MCF 10A (cell line): ENCODE measurements at regions of chr10 and their contacts with region 1.

Region 1: DNA sequence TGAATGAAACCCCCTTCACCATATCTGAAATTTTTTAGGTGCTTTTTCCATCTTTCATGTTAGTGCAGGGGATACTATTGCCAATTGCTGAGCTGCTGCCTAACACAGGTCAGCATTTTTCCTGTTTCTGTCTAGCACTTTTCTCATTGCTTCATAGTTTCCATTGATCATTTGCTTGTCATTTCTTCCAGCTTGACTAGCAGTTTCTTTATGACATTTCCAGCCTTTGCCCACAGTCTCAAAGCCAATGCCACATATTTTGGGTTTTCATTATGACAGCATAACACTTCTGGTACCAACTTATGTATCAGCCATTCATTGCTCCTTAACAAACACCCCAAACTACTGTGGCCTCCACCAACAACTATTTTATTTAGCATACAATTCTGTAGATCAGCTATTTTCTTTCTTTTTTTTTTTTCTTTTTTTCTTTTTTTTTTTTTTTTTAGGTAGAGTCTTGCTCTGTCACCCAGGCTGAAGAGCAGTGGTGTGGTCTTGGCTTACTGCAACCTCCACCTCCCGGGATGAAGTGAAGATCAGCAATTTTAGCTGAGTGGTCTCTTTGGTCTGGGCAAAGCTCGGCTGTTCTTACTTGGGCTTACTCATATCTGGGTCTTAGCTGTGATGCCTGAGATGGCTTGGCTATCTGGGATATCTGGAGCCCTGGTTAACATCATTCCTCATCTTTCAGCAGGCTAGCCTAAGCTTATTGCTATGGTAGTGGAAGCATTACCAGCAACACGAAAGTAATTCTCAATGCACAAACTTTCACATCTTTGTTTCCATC is 102.3 kb downstream of the EPC1 start:
- DNase-seq: no peak
- H3K4me3 Mint-ChIP-seq: no peak overlapping the region
- H3K27ac Mint-ChIP-seq: no peak overlapping the region
- H3K4me1 Mint-ChIP-seq: peaks cover 29% of the 10 kb centered on the region
- H3K27me3 Mint-ChIP-seq: no peaks in the 10 kb centered on the region
- CTCF ChIP-seq: no peak

Region 2: DNA sequence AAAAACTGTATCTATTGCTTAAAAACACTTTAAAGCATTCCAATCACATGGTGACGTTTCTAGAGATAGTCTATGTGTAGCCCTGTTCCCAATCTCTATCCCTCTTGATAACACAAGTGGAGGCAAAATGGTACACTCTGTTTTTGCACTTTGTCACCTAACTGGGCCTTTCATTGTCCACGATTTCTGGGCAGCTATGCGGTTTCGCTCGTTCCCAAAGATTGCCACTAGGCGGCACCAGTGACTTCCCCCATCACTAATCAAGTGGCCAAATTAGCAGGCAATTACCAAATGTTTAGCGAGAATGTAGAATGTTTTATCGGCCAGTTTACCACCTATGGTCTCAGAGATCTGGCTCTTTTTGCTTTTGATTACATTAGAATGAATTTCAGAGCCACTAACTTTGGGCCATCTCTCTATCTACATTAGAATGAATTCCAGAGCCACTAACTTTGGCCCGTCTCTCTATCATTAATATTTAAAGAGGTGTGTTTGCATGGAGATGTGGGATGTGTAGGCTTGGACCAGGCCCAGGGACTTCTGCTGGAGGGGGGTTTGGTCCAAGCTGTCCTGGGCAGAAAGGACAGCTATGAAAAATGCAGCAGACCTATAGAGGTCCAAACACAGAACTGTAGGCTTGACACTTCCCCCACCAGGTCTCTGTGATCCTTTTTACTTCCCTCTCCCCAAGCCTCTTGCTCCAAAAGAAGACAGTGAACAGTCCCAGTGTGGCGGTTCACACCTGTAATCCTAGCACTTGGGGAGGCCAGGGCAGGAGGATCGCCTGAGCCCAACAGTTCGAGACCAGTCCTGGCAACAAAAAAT is 12.2 kb after region 1 on chr10:
- CTCF ChIA-PET with region 1: interaction called, 11 read pairs
- POLR2A ChIA-PET with region 1: interaction called, 4 read pairs
- intact Hi-C with region 1: no loop called
- DNase-seq: peak; percentile 77
- H3K4me3 Mint-ChIP-seq: no peak overlapping the region
- H3K27ac Mint-ChIP-seq: no peak overlapping the region
- H3K4me1 Mint-ChIP-seq: peaks cover 9% of the 10 kb centered on the region
- H3K27me3 Mint-ChIP-seq: no peaks in the 10 kb centered on the region
- CTCF ChIP-seq: peak; percentile 85